Heart left ventricle (tissue), 16 donors: ENCODE measurements at regions of chr18 and their contacts with region 1.

Region 1: DNA sequence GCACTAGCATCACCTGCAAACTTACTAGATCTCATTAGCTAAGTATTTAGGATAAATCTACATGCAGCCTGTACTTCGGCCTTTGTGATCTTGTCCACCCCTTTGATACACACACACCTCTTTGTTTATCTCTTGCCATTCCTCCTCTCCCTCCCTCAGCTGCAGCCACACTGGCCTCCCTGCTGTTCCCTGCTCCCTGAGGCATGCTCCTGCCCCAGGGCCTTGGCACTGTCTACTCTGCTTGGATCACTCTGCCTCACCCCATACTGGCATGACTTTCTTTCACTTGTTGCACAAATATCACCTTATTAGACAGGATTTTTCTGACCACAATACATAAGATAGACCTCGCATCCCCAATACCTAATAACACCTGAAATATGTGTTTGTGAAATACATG is 22.5 kb upstream of the TAF4B start:
- DNase-seq: no peak
- ATAC-seq: no peak
- H3K4me3 ChIP-seq: no peak overlapping the region
- H3K27ac ChIP-seq: no peak overlapping the region
- H3K4me1 ChIP-seq: no peaks in the 10 kb centered on the region
- H3K27me3 ChIP-seq: no peaks in the 10 kb centered on the region
- CTCF ChIP-seq: no peak
- POLR2A ChIP-seq: no peak

Region 2: DNA sequence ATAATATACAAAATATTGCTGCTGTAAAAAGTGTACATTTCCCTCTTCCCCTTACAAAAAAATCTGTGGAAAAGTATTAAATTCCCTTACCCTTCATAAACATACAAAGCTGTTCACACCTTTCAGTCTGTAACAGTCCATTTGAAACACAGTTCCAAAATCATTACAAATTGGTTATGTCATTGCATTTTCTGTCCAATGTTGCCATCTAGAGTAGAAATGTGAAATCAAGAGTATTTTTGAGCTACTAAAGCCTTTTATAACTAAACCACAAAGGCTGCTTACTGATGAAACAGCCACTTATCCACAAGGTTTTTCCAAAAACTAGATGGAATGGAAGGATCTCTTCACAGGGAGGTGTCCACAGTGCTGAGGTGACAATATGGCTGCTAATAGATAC is 185.8 kb before region 1 on chr18:
- intact Hi-C with region 1: no loop called
- DNase-seq: no peak
- ATAC-seq: no peak
- H3K4me3 ChIP-seq: no peak overlapping the region
- H3K27ac ChIP-seq: no peak overlapping the region
- H3K4me1 ChIP-seq: no peaks in the 10 kb centered on the region
- H3K27me3 ChIP-seq: no peaks in the 10 kb centered on the region
- CTCF ChIP-seq: peak in 1 of 12 donors; percentile 16
- POLR2A ChIP-seq: no peak

Region 3: GRCh38 chr18:26226229-26227005 is 22.7 kb after region 1 on chr18 and contains the start of gene TAF4B:
- intact Hi-C with region 1: loop called in 1 of 10 experiments (anchors 2 kb)
- DNase-seq: peak; percentile 93 to 97 (median 94)
- ATAC-seq: peak; percentile 95 to 99 (median 99)
- H3K4me3 ChIP-seq: peak within 1 kb of the TSS; percentile 38 to 94 (median 78)
- H3K27ac ChIP-seq: peak within 1 kb of the TSS in 11 of 12 donors; percentile 2 to 77 (median 64)
- H3K4me1 ChIP-seq: peaks cover 0 to 20% (median 8%) of the 10 kb centered on the region in 12 donors
- H3K27me3 ChIP-seq: no peaks in the 10 kb centered on the region
- CTCF ChIP-seq: no peak
- POLR2A ChIP-seq: no peak
- total RNA-seq, gene TAF4B: 0.76 to 3.6 (median 1.7) TPM